Left cardiac atrium (tissue), 4 donors: ENCODE measurements at regions of chr17 and their contacts with region 1.

Region 1: GRCh38 chr17:46986366-46986765 is 7.3 kb upstream of the RPRML start:
- DNase-seq: no peak
- ATAC-seq: no peak

Region 2: DNA sequence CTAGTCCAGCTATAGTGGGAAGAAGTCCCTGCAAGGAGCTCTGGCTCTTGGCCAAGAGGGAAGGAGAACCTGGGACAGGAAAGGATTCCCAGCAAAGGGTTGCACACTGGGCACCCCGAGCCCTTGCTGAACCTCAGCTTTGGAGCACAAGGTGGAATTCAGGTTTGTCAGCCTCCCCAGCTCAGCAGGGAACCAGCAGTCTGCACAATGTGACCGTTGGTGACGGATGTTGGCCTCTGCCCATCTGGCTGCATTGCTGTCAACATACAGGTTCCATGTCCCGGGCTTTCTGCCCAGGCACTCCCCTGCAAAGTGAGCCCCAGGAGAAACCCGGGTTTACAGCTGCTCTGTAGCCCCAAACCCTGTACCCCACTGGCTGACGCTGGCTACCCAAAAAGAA is 14.0 kb before region 1 on chr17:
- intact Hi-C with region 1: loop called in 1 of 2 experiments (anchors 2 kb)
- DNase-seq: no peak
- ATAC-seq: no peak